Naive thymus-derived CD4-positive, alpha-beta T cell (primary cell): ENCODE measurements at regions of chr9 and their contacts with region 1.

Region 1: GRCh38 chr9:119961774-119962424 is 592.7 kb upstream of the BRINP1 start:
- DNase-seq: no peak
- ATAC-seq: no peak
- H3K4me3 ChIP-seq: no peak overlapping the region
- H3K4me3 Mint-ChIP-seq: no peak overlapping the region
- H3K27ac ChIP-seq: no peak overlapping the region
- H3K27ac Mint-ChIP-seq: no peak overlapping the region
- H3K4me1 ChIP-seq: no peaks in the 10 kb centered on the region
- H3K4me1 Mint-ChIP-seq: no peaks in the 10 kb centered on the region
- H3K27me3 ChIP-seq: no peaks in the 10 kb centered on the region
- H3K27me3 Mint-ChIP-seq: peaks cover 3 to 21% (median 17%) of the 10 kb centered on the region in 5 donors

Region 2: GRCh38 chr9:120531683-120532300 is 569.9 kb after region 1 on chr9:
- CTCF ChIA-PET with region 1: no interaction called
- POLR2A ChIA-PET with region 1: no interaction called
- intact Hi-C with region 1: loop called in 1 of 2 experiments (anchors 5 kb)
- DNase-seq: no peak
- ATAC-seq: no peak
- H3K4me3 ChIP-seq: no peak overlapping the region
- H3K4me3 Mint-ChIP-seq: no peak overlapping the region
- H3K27ac ChIP-seq: no peak overlapping the region
- H3K27ac Mint-ChIP-seq: no peak overlapping the region
- H3K4me1 ChIP-seq: no peaks in the 10 kb centered on the region
- H3K4me1 Mint-ChIP-seq: peaks cover 0 to 14% (median 4%) of the 10 kb centered on the region in 7 donors
- H3K27me3 ChIP-seq: no peaks in the 10 kb centered on the region
- H3K27me3 Mint-ChIP-seq: no peaks in the 10 kb centered on the region